Psoas muscle (tissue), 8 donors: ENCODE measurements at regions of chr22 and their contacts with region 1.

Region 1: DNA sequence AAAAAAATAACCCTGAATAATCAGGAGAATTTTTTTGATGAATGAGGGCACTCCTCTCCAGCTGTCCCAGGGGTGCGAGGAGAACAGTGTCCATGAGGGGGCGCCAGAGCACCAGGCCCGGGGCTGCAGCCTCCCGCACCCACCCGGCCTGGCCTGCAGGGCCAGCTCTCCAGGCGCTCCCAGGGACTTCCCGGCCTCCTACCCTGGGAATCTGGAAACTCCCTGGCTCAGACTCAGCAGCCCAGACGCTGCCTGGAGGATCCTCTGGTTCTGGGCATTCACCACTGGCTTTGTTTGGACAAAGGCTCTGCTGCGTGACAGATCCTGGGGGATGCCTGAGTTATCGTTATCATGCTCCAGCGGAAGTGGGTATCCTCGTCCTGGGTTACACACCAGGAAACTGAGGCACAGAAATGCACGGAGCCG is 31.0 kb downstream of the MCM5 start:
- DNase-seq: peak; percentile 88 to 92
- ATAC-seq: peak; percentile 95 to 98 (median 96)
- H3K4me3 ChIP-seq: no peak overlapping the region
- H3K27ac ChIP-seq: no peak overlapping the region
- H3K4me1 ChIP-seq: peaks cover 24% of the 10 kb centered on the region
- H3K27me3 ChIP-seq: no peaks in the 10 kb centered on the region
- CTCF ChIP-seq: peak; percentile 96

Region 2: DNA sequence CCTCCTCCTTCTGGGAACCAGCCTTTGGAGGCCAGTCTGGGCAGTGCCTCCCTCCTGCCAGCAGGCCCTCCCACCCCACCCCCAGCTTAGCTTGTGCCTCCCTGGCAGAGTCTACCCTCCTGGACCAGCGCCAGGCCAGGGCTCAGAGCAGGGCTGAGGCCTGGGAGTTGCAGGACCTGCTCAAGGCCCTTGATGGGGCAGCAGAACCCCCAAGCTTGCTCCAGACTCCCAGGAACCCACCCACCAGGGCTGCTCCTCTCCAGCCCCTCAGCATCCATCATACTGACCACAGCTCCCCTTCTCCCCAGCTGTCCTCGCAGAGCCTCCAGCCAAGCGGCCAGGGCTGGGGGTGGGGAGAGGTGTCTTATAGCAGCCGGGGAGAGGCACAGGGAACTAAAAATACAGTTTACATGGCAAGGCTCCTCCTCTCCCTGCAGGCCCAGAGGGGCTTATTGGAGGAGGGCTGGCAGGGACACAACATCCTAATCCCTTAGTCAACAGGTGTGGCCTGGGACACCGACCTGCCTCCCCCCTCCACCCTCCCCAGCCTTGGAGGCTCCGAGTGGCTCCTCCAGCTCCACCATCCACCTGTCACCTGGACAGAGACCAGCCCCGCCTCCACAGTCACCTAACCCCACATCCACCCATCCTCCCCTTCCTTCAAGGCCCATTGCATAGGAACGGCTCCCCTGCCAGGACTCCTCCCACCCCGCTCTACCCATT is 191.4 kb after region 1 on chr22:
- intact Hi-C with region 1: loop called (anchors 2 kb)
- DNase-seq: peak; percentile 79 to 90
- ATAC-seq: peak; percentile 77 to 84 (median 79)
- H3K4me3 ChIP-seq: peak overlapping the region; percentile 58
- H3K27ac ChIP-seq: peak overlapping the region; percentile 93
- H3K4me1 ChIP-seq: peaks cover 51% of the 10 kb centered on the region
- H3K27me3 ChIP-seq: no peaks in the 10 kb centered on the region
- CTCF ChIP-seq: no peak